B cell (primary cell): ENCODE measurements at regions of chr3 and their contacts with region 1.

Region 1: GRCh38 chr3:36911990-36912804 is 32.7 kb downstream of the TRANK1 start:
- DNase-seq: peak; percentile 88
- ATAC-seq: peak; percentile 83
- H3K4me3 ChIP-seq: peak overlapping the region in 4 of 5 experiments; percentile 9 to 35 (median 18)
- H3K4me3 Mint-ChIP-seq: peak overlapping the region; percentile 35
- H3K27ac ChIP-seq: peak overlapping the region; percentile 90 to 91
- H3K27ac Mint-ChIP-seq: peak overlapping the region; percentile 84
- H3K4me1 ChIP-seq: peaks cover 35 to 51% of the 10 kb centered on the region in 2 donors
- H3K4me1 Mint-ChIP-seq: peaks cover 53% of the 10 kb centered on the region
- H3K27me3 ChIP-seq: no peaks in the 10 kb centered on the region
- H3K27me3 Mint-ChIP-seq: no peaks in the 10 kb centered on the region
- CTCF ChIP-seq: no peak

Region 2: DNA sequence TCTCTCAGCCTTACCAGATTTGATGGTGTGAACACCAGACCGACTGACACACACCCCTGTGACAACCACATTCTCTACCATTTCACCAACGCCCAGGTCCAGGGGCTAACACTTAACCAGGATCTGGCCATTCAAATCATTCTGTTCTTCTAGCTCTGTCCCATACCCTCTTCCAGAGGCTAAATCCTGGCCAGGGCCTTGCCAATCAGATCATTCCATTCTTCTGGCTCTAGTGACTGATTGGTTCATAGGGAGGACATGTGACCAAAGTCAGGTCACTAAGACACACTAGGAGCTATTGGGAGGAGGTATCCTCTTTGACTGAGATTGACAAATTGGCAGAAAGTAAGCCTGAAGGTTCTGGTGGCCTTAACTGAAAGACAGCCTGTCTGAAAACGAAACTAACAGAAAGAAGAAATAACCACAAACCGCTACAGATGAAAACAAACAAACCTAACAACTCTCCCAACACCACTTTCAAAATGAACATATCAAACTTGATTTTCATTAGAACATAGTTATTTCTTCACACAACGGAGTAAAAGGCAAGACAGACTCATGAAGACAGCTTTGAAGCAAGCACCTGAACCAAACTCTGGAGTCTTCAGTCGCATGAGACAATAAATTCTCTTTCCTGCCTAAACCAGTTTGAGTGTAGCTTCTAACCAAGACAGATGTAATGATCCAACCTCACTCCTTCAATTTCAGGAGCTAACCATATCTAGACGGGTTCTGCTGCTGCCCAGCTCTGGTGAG is 35.8 kb before region 1 on chr3:
- CTCF ChIA-PET with region 1: interaction called, 6 read pairs
- POLR2A ChIA-PET with region 1: interaction called, 4 read pairs
- intact Hi-C with region 1: loop called (anchors 1 kb)
- DNase-seq: peak; percentile 71
- ATAC-seq: peak; percentile 90
- H3K4me3 ChIP-seq: peak overlapping the region; percentile 4 to 58 (median 40)
- H3K4me3 Mint-ChIP-seq: peak overlapping the region; percentile 84
- H3K27ac ChIP-seq: peak overlapping the region; percentile 89 to 92
- H3K27ac Mint-ChIP-seq: peak overlapping the region; percentile 93
- H3K4me1 ChIP-seq: peaks cover 21 to 22% of the 10 kb centered on the region in 2 donors
- H3K4me1 Mint-ChIP-seq: peaks cover 47% of the 10 kb centered on the region
- H3K27me3 ChIP-seq: no peaks in the 10 kb centered on the region
- H3K27me3 Mint-ChIP-seq: no peaks in the 10 kb centered on the region
- CTCF ChIP-seq: no peak

Region 3: GRCh38 chr3:36893137-36893557 is 19.1 kb before region 1 on chr3:
- CTCF ChIA-PET with region 1: interaction called, 90 read pairs
- POLR2A ChIA-PET with region 1: interaction called, 15 read pairs
- intact Hi-C with region 1: loop called (anchors 1 kb)
- DNase-seq: peak; percentile 83
- ATAC-seq: peak; percentile 50
- H3K4me3 ChIP-seq: peak overlapping the region in 1 of 5 experiments; percentile 4
- H3K4me3 Mint-ChIP-seq: peak overlapping the region; percentile 70
- H3K27ac ChIP-seq: peak overlapping the region; percentile 84 to 97
- H3K27ac Mint-ChIP-seq: peak overlapping the region; percentile 97
- H3K4me1 ChIP-seq: peaks cover 78% of the 10 kb centered on the region in 2 donors
- H3K4me1 Mint-ChIP-seq: peaks cover 84% of the 10 kb centered on the region
- H3K27me3 ChIP-seq: no peaks in the 10 kb centered on the region
- H3K27me3 Mint-ChIP-seq: no peaks in the 10 kb centered on the region
- CTCF ChIP-seq: no peak

Region 4: GRCh38 chr3:36923523-36923943 is 11.3 kb after region 1 on chr3:
- CTCF ChIA-PET with region 1: interaction called, 6 read pairs
- POLR2A ChIA-PET with region 1: interaction called, 6 read pairs
- intact Hi-C with region 1: loop called (anchors 1 kb)
- DNase-seq: peak; percentile 55
- ATAC-seq: no peak
- H3K4me3 ChIP-seq: peak overlapping the region in 3 of 5 experiments; percentile 1 to 24 (median 12)
- H3K4me3 Mint-ChIP-seq: peak overlapping the region; percentile 80
- H3K27ac ChIP-seq: peak overlapping the region; percentile 2 to 60
- H3K27ac Mint-ChIP-seq: peak overlapping the region; percentile 83
- H3K4me1 ChIP-seq: peaks cover 39 to 50% of the 10 kb centered on the region in 2 donors
- H3K4me1 Mint-ChIP-seq: peaks cover 49% of the 10 kb centered on the region
- H3K27me3 ChIP-seq: no peaks in the 10 kb centered on the region
- H3K27me3 Mint-ChIP-seq: no peaks in the 10 kb centered on the region
- CTCF ChIP-seq: no peak

Region 5: DNA sequence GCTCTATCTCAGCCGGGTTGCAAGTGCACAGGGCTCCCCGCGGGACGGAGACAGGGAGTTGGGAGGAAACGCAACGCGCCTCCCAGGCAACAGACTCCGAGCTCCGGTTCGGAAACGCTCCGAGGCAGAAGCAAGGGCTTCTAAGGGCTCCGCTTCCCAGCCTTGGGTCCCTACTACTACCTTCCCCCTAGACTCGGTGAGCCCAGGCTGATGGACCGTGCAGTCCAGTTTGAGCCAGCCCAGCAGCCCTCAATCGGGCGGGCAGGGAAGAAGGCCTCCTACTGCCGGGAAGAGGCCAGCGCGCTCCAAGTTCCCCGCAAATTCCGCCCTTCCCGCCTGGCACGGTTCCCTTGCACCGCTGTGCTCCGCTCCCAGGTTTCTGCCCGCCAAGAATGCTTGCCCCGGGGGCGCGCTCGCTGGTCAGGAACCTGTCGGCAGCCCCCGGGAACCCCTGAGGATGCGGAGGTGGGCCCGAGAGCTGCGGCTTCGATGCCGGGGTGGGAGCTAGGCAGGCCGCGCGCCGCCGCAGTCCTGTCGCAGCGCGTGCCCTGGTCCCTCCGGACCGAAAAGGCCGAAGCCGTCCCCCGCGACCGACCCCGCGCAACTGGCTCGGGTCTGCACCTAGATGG is 31.9 kb after region 1 on chr3:
- CTCF ChIA-PET with region 1: interaction called, 15 read pairs
- POLR2A ChIA-PET with region 1: interaction called, 14 read pairs
- intact Hi-C with region 1: loop called (anchors 1 kb)
- DNase-seq: no peak
- ATAC-seq: peak; percentile 39
- H3K4me3 ChIP-seq: peak overlapping the region; percentile 22 to 79 (median 76)
- H3K4me3 Mint-ChIP-seq: peak overlapping the region; percentile 90
- H3K27ac ChIP-seq: peak overlapping the region in 1 of 2 donors; percentile 76
- H3K27ac Mint-ChIP-seq: peak overlapping the region; percentile 78
- H3K4me1 ChIP-seq: peaks cover 6 to 14% of the 10 kb centered on the region in 2 donors
- H3K4me1 Mint-ChIP-seq: peaks cover 16% of the 10 kb centered on the region
- H3K27me3 ChIP-seq: no peaks in the 10 kb centered on the region
- H3K27me3 Mint-ChIP-seq: no peaks in the 10 kb centered on the region
- CTCF ChIP-seq: no peak

Region 6: DNA sequence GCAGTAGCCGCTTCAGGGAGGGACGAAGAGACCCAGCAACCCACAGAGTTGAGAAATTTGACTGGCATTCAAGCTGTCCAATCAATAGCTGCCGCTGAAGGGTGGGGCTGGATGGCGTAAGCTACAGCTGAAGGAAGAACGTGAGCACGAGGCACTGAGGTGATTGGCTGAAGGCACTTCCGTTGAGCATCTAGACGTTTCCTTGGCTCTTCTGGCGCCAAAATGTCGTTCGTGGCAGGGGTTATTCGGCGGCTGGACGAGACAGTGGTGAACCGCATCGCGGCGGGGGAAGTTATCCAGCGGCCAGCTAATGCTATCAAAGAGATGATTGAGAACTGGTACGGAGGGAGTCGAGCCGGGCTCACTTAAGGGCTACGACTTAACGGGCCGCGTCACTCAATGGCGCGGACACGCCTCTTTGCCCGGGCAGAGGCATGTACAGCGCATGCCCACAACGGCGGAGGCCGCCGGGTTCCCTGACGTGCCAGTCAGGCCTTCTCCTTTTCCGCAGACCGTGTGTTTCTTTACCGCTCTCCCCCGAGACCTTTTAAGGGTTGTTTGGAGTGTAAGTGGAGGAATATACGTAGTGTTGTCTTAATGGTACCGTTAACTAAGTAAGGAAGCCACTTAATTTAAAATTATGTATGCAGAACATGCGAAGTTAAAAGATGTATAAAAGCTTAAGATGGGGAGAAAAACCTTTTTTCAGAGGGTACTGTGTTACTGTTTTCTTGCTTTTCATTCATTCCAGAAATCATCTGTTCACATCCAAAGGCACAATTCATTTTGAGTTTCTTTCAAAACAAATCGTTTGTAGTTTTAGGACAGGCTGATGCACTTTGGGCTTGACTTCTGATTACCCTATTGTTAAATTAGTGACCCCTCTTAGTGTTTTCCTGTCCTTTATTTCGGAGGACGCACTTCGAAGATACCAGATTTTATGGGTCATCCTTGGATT is 81.4 kb after region 1 on chr3 and contains the start of gene MLH1:
- CTCF ChIA-PET with region 1: interaction called, 7 read pairs
- POLR2A ChIA-PET with region 1: interaction called, 5 read pairs
- intact Hi-C with region 1: loop called (anchors 1 kb)
- DNase-seq: peak; percentile 100
- ATAC-seq: peak; percentile 85
- H3K4me3 ChIP-seq: peak within 1 kb of the TSS; percentile 72 to 86 (median 76)
- H3K4me3 Mint-ChIP-seq: no peak within 1 kb of the TSS
- H3K27ac ChIP-seq: peak within 1 kb of the TSS; percentile 97 to 98
- H3K27ac Mint-ChIP-seq: no peak within 1 kb of the TSS
- H3K4me1 ChIP-seq: peaks cover 39 to 46% of the 10 kb centered on the region in 2 donors
- H3K4me1 Mint-ChIP-seq: peaks cover 38% of the 10 kb centered on the region
- H3K27me3 ChIP-seq: no peaks in the 10 kb centered on the region
- H3K27me3 Mint-ChIP-seq: no peaks in the 10 kb centered on the region
- CTCF ChIP-seq: no peak
- total RNA-seq, gene MLH1: 38.5 and 46.3 TPM in 2 replicates

Region 7: DNA sequence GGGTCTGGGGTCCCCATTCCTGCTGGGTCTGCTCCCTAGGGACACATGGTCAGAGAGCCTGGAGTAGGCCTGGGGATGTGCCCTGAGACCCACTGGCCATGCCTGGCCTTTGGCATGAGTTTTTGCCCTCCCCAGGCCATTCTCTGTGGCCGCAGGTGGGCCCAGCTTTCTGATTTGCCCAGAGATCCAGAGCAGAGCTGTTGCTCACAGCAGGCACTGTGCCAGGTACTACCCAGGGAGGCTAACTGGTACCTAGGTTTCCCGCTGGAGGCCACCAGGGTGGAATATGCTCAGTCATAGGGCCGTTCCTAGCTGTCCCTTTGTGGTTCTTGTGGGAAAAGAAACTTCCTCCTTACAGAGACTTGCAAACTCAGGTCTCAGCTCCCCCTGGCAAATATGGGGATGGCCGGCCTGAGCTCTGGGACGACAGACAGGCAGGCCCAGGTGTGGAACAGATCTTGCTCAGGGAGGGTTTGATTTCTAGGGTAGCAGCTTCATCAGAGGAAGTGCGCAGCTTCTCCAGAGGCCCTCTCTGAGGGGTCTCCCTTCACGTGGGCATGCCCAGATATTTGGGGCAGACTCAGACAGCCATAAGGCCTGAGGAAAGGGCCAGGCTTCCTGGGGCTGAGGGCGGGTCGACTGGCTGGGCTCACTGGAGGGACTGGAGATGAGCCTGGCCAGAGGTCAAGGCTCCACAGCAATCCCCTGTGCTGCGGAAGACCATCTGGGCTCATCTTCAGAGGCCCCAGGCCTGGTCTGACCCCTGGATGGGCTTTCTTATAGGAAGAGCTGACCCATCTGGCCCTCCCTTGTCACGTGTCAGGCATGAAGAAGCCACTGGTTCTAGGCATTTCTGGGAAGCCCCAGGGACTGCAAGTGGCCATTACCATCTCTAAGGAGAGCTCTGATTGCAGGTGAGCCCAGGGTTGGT is 1196.7 kb after region 1 on chr3:
- CTCF ChIA-PET with region 1: no interaction called
- POLR2A ChIA-PET with region 1: no interaction called
- intact Hi-C with region 1: no loop called
- DNase-seq: no peak
- ATAC-seq: no peak
- H3K4me3 ChIP-seq: no peak overlapping the region
- H3K4me3 Mint-ChIP-seq: no peak overlapping the region
- H3K27ac ChIP-seq: no peak overlapping the region
- H3K27ac Mint-ChIP-seq: no peak overlapping the region
- H3K4me1 ChIP-seq: no peaks in the 10 kb centered on the region
- H3K4me1 Mint-ChIP-seq: no peaks in the 10 kb centered on the region
- H3K27me3 ChIP-seq: peaks cover 0 to 10% (median 0%) of the 10 kb centered on the region in 4 experiments
- H3K27me3 Mint-ChIP-seq: peaks cover 5% of the 10 kb centered on the region
- CTCF ChIP-seq: no peak